ENCODE measurements at regions of chr17 and their contacts with region 1.

Region 1: GRCh38 chr17:37761059-37761458 is 16.2 kb upstream of the HNF1B start:
- DNase-seq: no peak
- ATAC-seq: no peak
- H3K4me3 ChIP-seq: no peak overlapping the region
- H3K27ac ChIP-seq: no peak overlapping the region
- H3K4me1 ChIP-seq: no peaks in the 10 kb centered on the region
- H3K27me3 ChIP-seq: peaks cover 0 to 63% (median 5%) of the 10 kb centered on the region in 3 donors
- CTCF ChIP-seq: no peak

Region 2: DNA sequence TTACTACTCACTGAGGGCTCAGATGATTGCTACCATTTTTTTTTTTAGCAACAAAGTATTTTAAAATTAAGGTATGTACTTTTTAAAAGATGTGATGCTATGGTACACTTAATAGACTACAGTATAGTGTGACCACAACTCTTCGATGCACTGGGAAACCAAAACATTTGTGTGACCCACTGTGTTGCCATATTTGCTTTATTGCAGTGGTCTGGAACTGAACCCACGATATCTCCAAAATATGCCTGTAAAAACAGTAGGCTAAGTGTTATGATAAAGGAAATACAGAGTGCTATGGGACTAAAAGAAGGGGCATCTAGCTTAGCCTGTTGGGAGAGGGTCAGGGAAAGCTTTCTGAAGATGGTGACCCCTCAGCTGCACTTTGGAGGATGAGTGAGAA is 25.4 kb after region 1 on chr17:
- intact Hi-C with region 1: loop called in 1 of 2 experiments (anchors 1 kb)
- DNase-seq: no peak
- ATAC-seq: no peak
- H3K4me3 ChIP-seq: no peak overlapping the region
- H3K27ac ChIP-seq: no peak overlapping the region
- H3K4me1 ChIP-seq: no peaks in the 10 kb centered on the region
- H3K27me3 ChIP-seq: peaks cover 3 to 35% (median 6%) of the 10 kb centered on the region in 3 donors
- CTCF ChIP-seq: no peak

Region 3: DNA sequence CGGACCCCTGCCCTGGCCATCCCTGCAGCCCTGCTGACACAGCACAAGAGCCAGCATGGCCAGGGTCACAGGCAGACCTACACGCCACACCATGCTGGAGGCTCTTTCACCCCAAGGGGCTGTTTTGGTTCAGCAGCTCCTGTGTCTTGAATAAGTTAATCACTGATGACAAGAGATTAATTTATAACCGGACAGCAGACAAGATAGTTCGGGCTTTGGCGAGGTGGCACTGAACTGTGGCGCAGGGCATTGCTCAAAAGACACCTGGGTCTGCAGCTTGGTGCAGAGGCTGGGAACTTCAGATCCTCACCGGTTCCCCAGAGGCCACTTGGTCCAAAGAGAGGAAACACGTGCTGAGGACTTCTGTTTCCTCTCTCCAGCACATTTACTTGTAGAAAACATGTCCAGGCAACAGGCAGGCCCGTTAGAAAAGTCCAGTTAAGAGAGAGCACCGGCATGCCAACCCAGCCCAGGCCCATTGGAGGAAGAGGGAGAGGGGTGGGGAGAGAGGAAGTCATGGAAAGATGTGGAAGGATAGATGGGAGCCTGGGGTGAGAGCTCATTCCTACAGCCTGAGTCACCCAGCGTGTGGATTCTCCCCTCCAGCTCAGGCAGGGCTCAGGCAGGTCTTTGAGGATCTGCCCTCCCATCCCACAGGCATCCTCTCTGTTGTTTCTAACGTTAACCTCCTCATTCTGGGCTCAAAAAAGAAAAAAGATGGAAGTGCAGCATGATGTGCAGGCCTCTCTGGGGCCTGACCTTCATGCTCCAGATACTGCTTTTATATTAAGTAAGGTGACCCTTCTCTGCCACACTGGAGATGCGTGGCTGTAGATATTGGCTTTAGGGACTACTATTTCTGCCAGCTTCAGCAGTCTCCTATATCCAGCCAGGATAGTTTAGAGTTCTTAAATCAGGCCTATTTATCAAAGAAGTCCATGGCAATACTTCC is 63.8 kb after region 1 on chr17:
- intact Hi-C with region 1: loop called in 1 of 2 experiments (anchors 10 kb)
- DNase-seq: no peak
- ATAC-seq: no peak
- H3K4me3 ChIP-seq: no peak overlapping the region
- H3K27ac ChIP-seq: no peak overlapping the region
- H3K4me1 ChIP-seq: no peaks in the 10 kb centered on the region
- H3K27me3 ChIP-seq: no peaks in the 10 kb centered on the region
- CTCF ChIP-seq: no peak

Measured in psoas muscle (tissue), 8 donors.